Motor neuron (in vitro differentiated cells): ENCODE measurements at regions of chr3 and their contacts with region 1.

Region 1: GRCh38 chr3:134308350-134308891 is 57.8 kb upstream of the RYK start:
- ATAC-seq: peak; percentile 79 to 96 (median 92)
- H3K4me3 ChIP-seq: peak overlapping the region in 1 of 5 donors; percentile 16
- H3K27ac ChIP-seq: no peak overlapping the region
- H3K4me1 ChIP-seq: peaks cover 2 to 3% of the 10 kb centered on the region in 2 donors

Region 2: DNA sequence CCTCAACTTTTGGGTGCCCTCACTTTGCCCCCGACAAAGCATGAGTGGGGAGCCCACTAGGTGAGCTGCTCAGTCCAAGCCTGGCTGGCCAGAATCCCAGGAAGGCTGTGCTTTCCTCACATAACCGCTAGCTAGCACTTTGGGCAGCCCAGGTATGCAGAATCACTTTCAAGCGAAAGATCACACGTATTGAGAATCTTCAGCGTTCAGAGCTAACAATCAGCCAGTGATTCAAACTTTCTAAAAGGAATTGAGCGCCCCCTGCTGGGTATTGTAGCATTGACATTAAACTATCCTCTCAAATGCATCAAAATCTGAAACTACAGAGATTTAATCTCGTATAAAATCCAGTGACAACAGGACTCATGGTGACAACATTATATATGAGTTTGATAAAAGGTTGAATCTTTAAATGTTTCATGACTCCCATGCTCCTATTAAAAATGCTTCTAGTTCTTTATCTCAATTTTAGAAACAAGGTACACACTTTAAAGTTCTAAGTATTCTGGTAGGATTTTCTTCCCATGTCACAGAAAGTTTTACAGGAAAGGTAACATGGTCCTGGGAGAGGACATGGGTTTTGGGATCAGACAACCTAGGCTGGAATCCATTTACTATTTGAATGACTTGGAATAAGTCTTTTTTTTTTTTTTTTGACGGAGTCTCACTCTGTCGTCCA is 165.6 kb after region 1 on chr3:
- in situ Hi-C with region 1: loop called (anchors 5 to 10 kb)
- ATAC-seq: peak; percentile 21 to 81 (median 70)
- H3K4me3 ChIP-seq: no peak overlapping the region
- H3K27ac ChIP-seq: no peak overlapping the region
- H3K4me1 ChIP-seq: peaks cover 0 to 6% of the 10 kb centered on the region in 2 donors

Region 3: DNA sequence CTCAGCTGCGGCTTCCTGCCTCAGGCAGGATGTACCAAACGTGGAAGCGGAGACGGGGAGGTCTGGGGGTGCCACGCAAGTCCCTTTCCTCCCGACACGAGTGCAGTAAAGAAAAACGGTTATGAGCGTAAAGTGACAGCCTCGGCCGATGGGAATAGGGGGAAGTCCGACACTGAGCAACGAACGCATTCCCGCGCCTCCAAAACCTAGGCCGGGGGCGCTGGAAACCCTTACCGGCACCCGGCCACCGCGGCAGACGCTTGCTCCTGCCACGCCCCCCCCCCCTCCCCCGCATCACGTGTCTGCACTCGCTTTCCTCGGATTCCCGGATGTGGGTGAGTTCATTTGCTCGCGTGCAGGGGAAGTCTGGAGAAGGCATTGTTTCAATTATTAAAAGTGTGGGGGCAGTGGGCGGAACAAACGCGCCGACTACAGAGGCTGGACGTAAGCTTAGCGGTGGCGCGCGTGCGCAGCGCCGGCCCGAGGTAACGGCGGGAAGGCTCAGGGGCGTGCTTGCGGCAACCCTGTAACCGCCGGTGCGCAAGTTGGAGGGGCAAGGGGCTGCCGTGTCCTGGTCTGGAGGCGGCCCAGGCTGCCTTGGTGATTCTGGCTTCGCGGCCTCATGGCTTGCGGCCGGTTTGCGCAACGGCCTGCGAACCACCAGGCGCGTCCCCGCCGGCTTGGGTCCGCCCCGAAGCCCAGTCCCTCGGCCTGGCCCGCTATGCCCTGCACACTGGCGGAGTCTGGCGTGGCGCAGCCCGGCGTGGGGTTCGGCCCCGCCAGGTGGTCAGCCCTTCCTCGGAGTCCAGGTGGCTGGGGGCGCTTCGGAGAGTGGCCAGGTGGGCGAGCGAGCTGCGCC is 177.5 kb after region 1 on chr3 and contains the starts of genes ANAPC13 and CEP63:
- in situ Hi-C with region 1: no loop called
- ATAC-seq: peak; percentile 83 to 93 (median 90)
- H3K4me3 ChIP-seq: peak within 1 kb of the TSS; percentile 66 to 83 (median 74)
- H3K27ac ChIP-seq: peak within 1 kb of the TSS; percentile 96 to 99
- H3K4me1 ChIP-seq: peaks cover 8 to 18% of the 10 kb centered on the region in 2 donors
- total RNA-seq, gene ANAPC13: 61.5 to 124 (median 103) TPM
- total RNA-seq, gene CEP63: 25.0 to 43.9 (median 29.9) TPM